Mammary epithelial cell (primary cell): ENCODE measurements at regions of chr16 and their contacts with region 1.

Region 1: DNA sequence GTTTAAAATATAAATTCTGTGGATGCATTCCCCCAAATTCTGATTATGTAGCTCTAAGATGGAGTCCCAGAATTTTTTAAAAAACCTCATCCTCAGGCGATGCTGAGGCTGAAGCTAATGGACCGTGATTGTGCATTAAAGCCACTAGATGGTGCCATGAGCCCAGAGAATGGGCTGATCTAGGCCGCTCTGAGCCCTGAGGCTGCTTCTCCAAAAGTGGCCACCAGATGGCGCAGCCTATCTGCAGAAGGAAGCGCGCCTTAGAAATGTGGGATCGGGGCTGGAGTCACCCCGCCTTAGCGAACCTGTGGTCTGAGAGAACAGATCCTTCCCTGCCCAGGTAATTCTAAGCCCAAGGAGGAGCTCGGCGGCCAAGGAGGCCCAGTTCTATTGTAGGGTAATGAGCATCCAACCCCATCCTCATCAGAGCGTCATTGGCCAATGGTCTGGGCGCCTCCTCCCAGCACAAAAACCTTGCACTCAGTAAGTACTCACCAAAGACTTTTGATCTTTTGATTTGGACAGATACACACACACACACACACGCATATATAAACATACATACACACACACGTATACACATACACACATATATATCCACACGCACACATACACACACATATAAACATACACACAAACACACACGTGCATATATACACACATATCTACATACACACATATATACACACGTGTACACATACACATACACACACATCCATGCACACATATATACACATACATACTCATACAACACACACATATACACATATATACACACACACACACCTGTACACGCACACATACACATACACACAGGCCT is 13.7 kb upstream of the MMP2 start:
- DNase-seq: peak; percentile 66
- H3K4me3 ChIP-seq: no peak overlapping the region
- H3K27ac ChIP-seq: no peak overlapping the region
- H3K4me1 ChIP-seq: peaks cover 5% of the 10 kb centered on the region
- H3K27me3 ChIP-seq: no peaks in the 10 kb centered on the region
- CTCF ChIP-seq: peak; percentile 100

Region 2: GRCh38 chr16:55389426-55390073 is 75.7 kb before region 1 on chr16:
- CTCF ChIA-PET with region 1: no interaction called
- dilution Hi-C with region 1: no loop called
- in situ Hi-C with region 1: no loop called
- intact Hi-C with region 1: no loop called
- DNase-seq: peak; percentile 32
- H3K4me3 ChIP-seq: no peak overlapping the region
- H3K27ac ChIP-seq: no peak overlapping the region
- H3K4me1 ChIP-seq: peaks cover 69% of the 10 kb centered on the region
- H3K27me3 ChIP-seq: no peaks in the 10 kb centered on the region
- CTCF ChIP-seq: no peak

Region 3: DNA sequence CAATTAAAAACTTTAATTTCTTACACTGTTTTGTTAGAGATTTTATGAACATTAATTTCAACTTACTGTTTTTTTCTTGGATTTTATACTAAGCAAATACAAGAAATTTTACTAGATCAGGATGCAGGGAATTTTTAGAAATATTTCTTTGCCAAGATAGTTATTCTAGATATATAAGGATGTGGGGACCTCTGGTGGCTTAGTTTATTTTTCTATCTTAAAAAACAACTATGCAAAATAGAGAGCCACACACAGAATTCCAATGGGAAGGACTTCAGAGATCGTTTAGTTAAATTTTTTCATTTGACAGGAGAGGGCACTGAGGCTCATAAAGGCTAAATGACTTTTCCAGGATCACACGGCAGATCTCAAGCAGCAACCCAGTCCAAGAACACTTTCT is 78.2 kb after region 1 on chr16:
- CTCF ChIA-PET with region 1: interaction called, 4 read pairs
- dilution Hi-C with region 1: no loop called
- in situ Hi-C with region 1: loop called in 1 of 2 experiments (anchors 5 kb)
- intact Hi-C with region 1: loop called (anchors 1 kb)
- DNase-seq: no peak
- H3K4me3 ChIP-seq: no peak overlapping the region
- H3K27ac ChIP-seq: no peak overlapping the region
- H3K4me1 ChIP-seq: peaks cover 25% of the 10 kb centered on the region
- H3K27me3 ChIP-seq: no peaks in the 10 kb centered on the region
- CTCF ChIP-seq: peak; percentile 11 to 35

Region 4: GRCh38 chr16:55622930-55623561 is 157.8 kb after region 1 on chr16:
- CTCF ChIA-PET with region 1: no interaction called
- dilution Hi-C with region 1: no loop called
- in situ Hi-C with region 1: no loop called
- intact Hi-C with region 1: loop called (anchors 1 kb)
- DNase-seq: peak; percentile 20
- H3K4me3 ChIP-seq: no peak overlapping the region
- H3K27ac ChIP-seq: no peak overlapping the region
- H3K4me1 ChIP-seq: no peaks in the 10 kb centered on the region
- H3K27me3 ChIP-seq: no peaks in the 10 kb centered on the region
- CTCF ChIP-seq: peak; percentile 52 to 63

Region 5: DNA sequence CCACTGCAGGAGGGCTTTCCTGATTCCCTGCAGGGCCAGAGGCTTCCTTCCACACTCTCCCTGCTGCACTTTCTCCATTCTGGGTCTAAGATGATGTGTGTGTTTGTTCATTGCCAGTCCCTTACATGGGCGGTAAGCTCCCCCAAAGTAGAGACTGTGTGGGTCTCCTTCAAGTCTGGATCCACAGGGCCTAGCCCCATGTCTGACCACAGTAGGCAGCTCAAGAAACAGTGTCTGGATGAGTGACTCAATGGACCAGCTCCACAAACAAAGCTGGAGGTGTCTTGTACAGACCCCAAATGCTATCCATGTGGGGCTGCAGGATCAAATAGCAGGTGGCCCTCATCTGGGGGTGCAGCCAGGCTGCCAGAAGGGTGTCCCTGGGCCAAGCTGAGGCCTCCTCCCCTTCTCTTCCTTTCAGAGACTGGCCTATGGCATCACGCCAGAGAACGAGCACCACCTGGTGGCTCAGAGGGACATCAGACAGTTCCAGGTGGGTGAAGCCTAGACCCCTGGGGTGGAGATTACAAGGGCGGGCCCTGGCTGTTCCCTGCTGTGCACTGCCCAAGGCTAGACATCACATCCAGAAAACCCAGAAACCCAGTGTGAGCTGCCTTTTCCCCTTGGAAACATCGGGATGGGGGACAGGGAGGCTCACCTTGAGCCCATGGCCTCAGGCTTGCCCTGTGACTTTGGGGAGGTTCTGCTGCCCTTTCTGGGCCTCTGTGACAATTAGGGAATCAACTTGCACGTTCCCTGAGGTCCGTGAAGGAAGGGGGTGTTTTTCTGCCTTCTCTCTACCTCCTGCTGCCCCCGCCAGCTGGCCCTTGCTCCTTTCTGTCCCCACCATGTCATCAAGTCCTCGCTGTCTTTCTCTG is 236.4 kb after region 1 on chr16:
- CTCF ChIA-PET with region 1: interaction called, 8 read pairs
- dilution Hi-C with region 1: no loop called
- in situ Hi-C with region 1: loop called (anchors 5 kb)
- intact Hi-C with region 1: loop called (anchors 1 kb)
- DNase-seq: peak; percentile 38
- H3K4me3 ChIP-seq: no peak overlapping the region
- H3K27ac ChIP-seq: no peak overlapping the region
- H3K4me1 ChIP-seq: peaks cover 2% of the 10 kb centered on the region
- H3K27me3 ChIP-seq: no peaks in the 10 kb centered on the region
- CTCF ChIP-seq: peak; percentile 56 to 86

Region 6: GRCh38 chr16:55842369-55843104 is 377.2 kb after region 1 on chr16:
- CTCF ChIA-PET with region 1: no interaction called
- dilution Hi-C with region 1: loop called (anchors 25 kb)
- in situ Hi-C with region 1: loop called (anchors 5 to 10 kb)
- intact Hi-C with region 1: loop called (anchors 2 kb)
- DNase-seq: peak; percentile 16
- H3K4me3 ChIP-seq: no peak overlapping the region
- H3K27ac ChIP-seq: no peak overlapping the region
- H3K4me1 ChIP-seq: no peaks in the 10 kb centered on the region
- H3K27me3 ChIP-seq: peaks cover 2% of the 10 kb centered on the region
- CTCF ChIP-seq: peak; percentile 51 to 68

Region 7: DNA sequence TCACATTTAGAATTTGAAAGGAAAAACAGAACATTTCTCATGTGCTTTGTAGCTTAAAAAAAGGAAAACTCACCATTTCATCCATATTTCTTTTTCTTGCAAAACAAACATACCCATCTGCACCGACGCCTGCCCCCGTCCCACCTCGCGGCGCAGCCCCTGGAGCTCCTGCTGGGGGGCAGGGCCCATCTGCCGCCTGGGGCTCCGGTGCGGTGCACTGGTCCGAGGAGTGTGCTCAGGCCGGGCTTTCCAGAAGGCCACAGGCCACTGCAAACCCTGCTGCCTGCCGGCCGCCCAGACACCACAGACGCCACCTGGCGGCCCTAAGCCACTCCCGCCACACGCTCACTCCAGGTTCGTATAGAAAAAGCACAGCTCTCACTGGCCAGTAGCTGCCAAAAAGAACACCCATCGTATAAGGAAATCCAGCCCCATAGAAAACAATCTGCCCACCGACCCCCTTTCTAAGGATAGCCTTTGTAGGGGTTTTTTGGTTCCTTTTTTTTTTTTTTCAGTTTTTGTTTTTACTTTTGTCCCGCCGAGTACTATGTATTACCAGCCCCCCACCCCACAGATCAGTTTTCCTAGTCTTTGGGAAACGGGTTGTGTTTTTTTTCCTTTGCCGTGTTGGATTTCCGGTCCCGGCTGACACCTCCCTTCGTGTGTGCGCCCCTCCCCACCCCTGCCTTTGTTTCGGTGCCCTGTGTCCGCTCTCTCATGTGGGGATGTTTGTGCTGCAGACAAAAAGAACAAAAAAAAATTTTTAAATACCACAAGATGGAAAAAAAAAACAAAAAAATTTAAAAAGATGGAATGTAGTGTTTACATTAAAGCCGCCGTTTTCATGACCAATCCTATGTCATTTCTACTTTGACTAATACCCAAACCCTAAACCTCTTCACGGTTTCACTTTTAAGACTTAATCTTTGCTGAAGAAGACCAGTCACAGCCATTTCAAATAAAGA is 891.3 kb after region 1 on chr16:
- CTCF ChIA-PET with region 1: no interaction called
- dilution Hi-C with region 1: no loop called
- in situ Hi-C with region 1: no loop called
- intact Hi-C with region 1: loop called (anchors 5 kb)
- DNase-seq: peak; percentile 67
- H3K4me3 ChIP-seq: peak overlapping the region; percentile 34 to 68 (median 46)
- H3K27ac ChIP-seq: peak overlapping the region; percentile 26
- H3K4me1 ChIP-seq: peaks cover 11% of the 10 kb centered on the region
- H3K27me3 ChIP-seq: no peaks in the 10 kb centered on the region
- CTCF ChIP-seq: peak; percentile 84 to 96